HEK293 (cell line): ENCODE measurements at regions of chrX and their contacts with region 1.

Region 1: DNA sequence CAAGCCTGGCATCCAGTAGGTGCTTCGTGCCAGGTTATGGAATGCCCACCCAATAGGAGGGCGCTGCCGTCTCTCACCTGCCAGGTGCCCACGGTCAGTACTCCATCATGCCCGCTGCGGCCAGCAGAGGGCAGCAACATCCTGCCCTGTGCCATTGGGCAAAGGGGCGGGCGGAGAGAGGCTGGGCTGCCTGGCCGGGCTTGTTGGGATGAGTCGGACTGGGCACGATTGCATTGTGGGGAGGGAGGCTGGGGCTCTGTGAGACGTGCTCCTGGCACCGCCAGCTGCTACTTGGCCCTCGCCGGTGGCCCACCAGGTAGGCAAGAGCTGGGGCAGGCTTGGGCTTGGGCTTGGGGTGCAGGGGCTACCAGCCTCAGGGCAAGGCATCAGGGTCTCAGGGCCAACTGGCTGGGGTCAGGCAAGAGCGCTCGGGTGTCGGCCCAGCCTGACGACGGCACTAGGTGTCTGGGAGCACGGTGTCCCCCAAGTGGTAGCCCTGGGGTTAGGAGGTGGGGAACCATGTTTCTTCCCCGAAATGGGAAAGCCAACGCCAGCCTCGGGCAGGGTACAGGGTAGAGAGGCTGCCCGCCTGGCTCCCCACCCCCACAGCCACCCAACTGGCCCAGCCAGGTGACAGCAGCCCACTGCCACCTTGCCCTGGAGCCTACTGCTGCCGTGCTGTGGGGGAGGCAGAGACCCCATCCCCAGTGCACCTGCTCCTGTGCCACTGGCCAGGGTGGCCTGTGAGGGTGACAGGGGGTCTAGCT is at the start of gene PLXNB3:
- H3K4me3 ChIP-seq: no peak within 1 kb of the TSS
- H3K27ac ChIP-seq: no peak within 1 kb of the TSS
- H3K4me1 ChIP-seq: 0 out of 2 replicates have a peak, but pooled peaks cover 3% of the 10 kb centered on the region
- CTCF ChIP-seq: peak; percentile 87

Region 2: GRCh38 chrX:153708415-153708814 is 55.8 kb before region 1 on chrX:
- CTCF ChIA-PET with region 1: no interaction called
- POLR2A ChIA-PET with region 1: no interaction called
- H3K4me3 ChIP-seq: no peak overlapping the region
- H3K27ac ChIP-seq: no peak overlapping the region
- H3K4me1 ChIP-seq: no peaks in the 10 kb centered on the region
- CTCF ChIP-seq: peak; percentile 85

Region 3: GRCh38 chrX:153782313-153782712 is 18.1 kb after region 1 on chrX:
- CTCF ChIA-PET with region 1: interaction called, 10 read pairs
- POLR2A ChIA-PET with region 1: interaction called, 7 read pairs
- H3K4me3 ChIP-seq: no peak overlapping the region
- H3K27ac ChIP-seq: no peak overlapping the region
- H3K4me1 ChIP-seq: no peaks in the 10 kb centered on the region
- CTCF ChIP-seq: no peak

Region 4: GRCh38 chrX:153830635-153831428 is 66.7 kb after region 1 on chrX:
- CTCF ChIA-PET with region 1: no interaction called
- POLR2A ChIA-PET with region 1: no interaction called
- H3K4me3 ChIP-seq: no peak overlapping the region; the same call in 1 of the 2 replicates
- H3K27ac ChIP-seq: no peak overlapping the region
- H3K4me1 ChIP-seq: no peaks in the 10 kb centered on the region
- CTCF ChIP-seq: no peak

Region 5: DNA sequence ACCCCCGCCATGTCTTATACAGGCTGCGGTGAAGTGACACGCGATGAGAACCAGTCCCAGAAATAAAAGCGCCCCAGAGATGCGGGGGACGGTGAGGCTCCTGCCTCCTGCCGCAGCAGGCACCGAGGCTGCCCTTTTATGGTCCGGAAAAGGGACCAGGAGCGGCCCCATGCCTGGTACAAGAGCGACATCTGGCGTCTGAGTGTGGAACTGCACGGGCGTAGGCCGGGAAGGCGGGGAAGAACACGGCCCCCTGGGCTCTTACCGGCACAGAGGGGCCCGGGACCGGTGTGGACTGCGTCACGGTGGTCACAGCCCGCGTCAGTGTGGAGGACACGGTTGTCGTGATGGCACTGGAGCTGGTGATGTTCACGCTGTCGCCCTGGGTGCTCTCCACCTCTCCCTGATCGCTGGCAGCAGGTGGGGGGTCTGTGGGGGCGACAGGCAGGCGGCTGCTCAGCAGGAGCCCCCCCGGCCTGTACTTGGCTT is 189.2 kb after region 1 on chrX:
- CTCF ChIA-PET with region 1: interaction called, 63 read pairs
- POLR2A ChIA-PET with region 1: no interaction called
- H3K4me3 ChIP-seq: no peak overlapping the region
- H3K27ac ChIP-seq: peak overlapping the region; percentile 36; the same call in 1 of the 2 replicates
- H3K4me1 ChIP-seq: no peaks in the 10 kb centered on the region; the same call in 1 of the 2 replicates
- CTCF ChIP-seq: peak; percentile 98